Caco-2 (cell line): ENCODE measurements at regions of chr3 and their contacts with region 1.

Region 1: GRCh38 chr3:49093853-49094767 is at the start of gene QRICH1:
- DNase-seq: peak; percentile 97 to 98
- H3K4me3 ChIP-seq: peak within 1 kb of the TSS; percentile 67
- H3K4me3 Mint-ChIP-seq: peak within 1 kb of the TSS; percentile 95
- H3K27ac Mint-ChIP-seq: peak within 1 kb of the TSS; percentile 99
- H3K4me1 ChIP-seq: peaks cover 4% of the 10 kb centered on the region
- H3K4me1 Mint-ChIP-seq: no peaks in the 10 kb centered on the region
- H3K27me3 ChIP-seq: no peaks in the 10 kb centered on the region
- H3K27me3 Mint-ChIP-seq: no peaks in the 10 kb centered on the region
- CTCF ChIP-seq: peak; percentile 33 to 83
- total RNA-seq, gene QRICH1: 112 and 119 TPM in 2 replicates

Region 2: GRCh38 chr3:49007068-49007770 is 86.9 kb before region 1 on chr3 and contains the start of gene WDR6:
- CTCF ChIA-PET with region 1: interaction called, 5 read pairs
- POLR2A ChIA-PET with region 1: interaction called, 21 read pairs
- intact Hi-C with region 1: no loop called
- DNase-seq: peak; percentile 98
- H3K4me3 ChIP-seq: peak within 1 kb of the TSS; percentile 92
- H3K4me3 Mint-ChIP-seq: peak within 1 kb of the TSS; percentile 94
- H3K27ac Mint-ChIP-seq: peak within 1 kb of the TSS; percentile 98
- H3K4me1 ChIP-seq: peaks cover 26% of the 10 kb centered on the region
- H3K4me1 Mint-ChIP-seq: peaks cover 13% of the 10 kb centered on the region
- H3K27me3 ChIP-seq: no peaks in the 10 kb centered on the region
- H3K27me3 Mint-ChIP-seq: no peaks in the 10 kb centered on the region
- CTCF ChIP-seq: peak in 1 of 2 experiments; percentile 8
- total RNA-seq, gene WDR6: 184 and 185 TPM in 2 replicates

Region 3: GRCh38 chr3:49028673-49029562 is 65.2 kb before region 1 on chr3 and contains the start of gene IMPDH2:
- CTCF ChIA-PET with region 1: interaction called, 4 read pairs
- POLR2A ChIA-PET with region 1: interaction called, 26 read pairs
- intact Hi-C with region 1: no loop called
- DNase-seq: peak; percentile 91 to 94
- H3K4me3 ChIP-seq: peak within 1 kb of the TSS; percentile 52
- H3K4me3 Mint-ChIP-seq: peak within 1 kb of the TSS; percentile 97
- H3K27ac Mint-ChIP-seq: peak within 1 kb of the TSS; percentile 100
- H3K4me1 ChIP-seq: peaks cover 12% of the 10 kb centered on the region
- H3K4me1 Mint-ChIP-seq: peaks cover 14% of the 10 kb centered on the region
- H3K27me3 ChIP-seq: no peaks in the 10 kb centered on the region
- H3K27me3 Mint-ChIP-seq: no peaks in the 10 kb centered on the region
- CTCF ChIP-seq: no peak
- total RNA-seq, gene IMPDH2: 233 and 240 TPM in 2 replicates

Region 4: GRCh38 chr3:49120438-49121131 is 26.5 kb after region 1 on chr3 and contains the start of gene USP19:
- CTCF ChIA-PET with region 1: interaction called, 9 read pairs
- POLR2A ChIA-PET with region 1: interaction called, 28 read pairs
- intact Hi-C with region 1: loop called (anchors 1 kb)
- DNase-seq: peak; percentile 89 to 91
- H3K4me3 ChIP-seq: peak within 1 kb of the TSS; percentile 90
- H3K4me3 Mint-ChIP-seq: peak within 1 kb of the TSS; percentile 79
- H3K27ac Mint-ChIP-seq: peak within 1 kb of the TSS; percentile 66
- H3K4me1 ChIP-seq: peaks cover 9% of the 10 kb centered on the region; the same call in 1 of the 2 replicates
- H3K4me1 Mint-ChIP-seq: no peaks in the 10 kb centered on the region
- H3K27me3 ChIP-seq: no peaks in the 10 kb centered on the region
- H3K27me3 Mint-ChIP-seq: no peaks in the 10 kb centered on the region
- CTCF ChIP-seq: no peak
- total RNA-seq, gene USP19: 55.9 and 56.4 TPM in 2 replicates

Region 5: DNA sequence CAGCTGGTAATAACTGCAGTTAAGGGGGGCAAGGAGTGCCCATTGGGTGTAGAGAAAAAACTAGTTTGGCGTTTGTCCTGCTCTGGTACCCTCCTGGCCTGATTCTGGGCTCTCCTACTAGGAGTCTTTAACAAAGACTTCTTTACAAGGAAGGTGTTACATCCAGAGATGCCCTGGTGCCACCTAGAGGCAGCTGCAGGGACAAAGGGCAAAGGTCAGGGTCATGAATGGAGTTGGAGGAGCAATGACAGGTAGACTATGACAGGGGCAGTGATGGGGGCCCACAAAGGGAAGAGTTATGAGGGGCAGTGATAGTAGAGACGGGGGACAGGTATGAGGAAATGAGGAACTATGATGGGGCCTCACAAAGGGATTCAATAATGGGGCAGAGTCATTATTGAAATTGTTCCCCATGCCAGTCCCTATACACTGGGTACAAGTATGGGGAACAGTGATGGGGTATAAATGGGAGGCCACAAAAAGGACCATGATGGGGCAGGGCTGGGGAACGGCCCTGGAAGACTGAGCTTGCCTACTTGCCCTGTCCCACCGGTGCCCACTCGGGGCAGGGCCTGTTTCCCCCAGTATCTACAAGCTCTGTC is 64.1 kb after region 1 on chr3:
- CTCF ChIA-PET with region 1: interaction called, 3 read pairs
- POLR2A ChIA-PET with region 1: no interaction called
- intact Hi-C with region 1: loop called (anchors 2 kb)
- DNase-seq: peak; percentile 78 to 79
- H3K4me3 ChIP-seq: no peak overlapping the region
- H3K4me3 Mint-ChIP-seq: no peak overlapping the region
- H3K27ac Mint-ChIP-seq: peak overlapping the region; percentile 4
- H3K4me1 ChIP-seq: no peaks in the 10 kb centered on the region
- H3K4me1 Mint-ChIP-seq: no peaks in the 10 kb centered on the region
- H3K27me3 ChIP-seq: no peaks in the 10 kb centered on the region
- H3K27me3 Mint-ChIP-seq: no peaks in the 10 kb centered on the region
- CTCF ChIP-seq: peak; percentile 58 to 86